Caco-2 (cell line): ENCODE measurements at regions of chr3 and their contacts with region 1.

Region 1: DNA sequence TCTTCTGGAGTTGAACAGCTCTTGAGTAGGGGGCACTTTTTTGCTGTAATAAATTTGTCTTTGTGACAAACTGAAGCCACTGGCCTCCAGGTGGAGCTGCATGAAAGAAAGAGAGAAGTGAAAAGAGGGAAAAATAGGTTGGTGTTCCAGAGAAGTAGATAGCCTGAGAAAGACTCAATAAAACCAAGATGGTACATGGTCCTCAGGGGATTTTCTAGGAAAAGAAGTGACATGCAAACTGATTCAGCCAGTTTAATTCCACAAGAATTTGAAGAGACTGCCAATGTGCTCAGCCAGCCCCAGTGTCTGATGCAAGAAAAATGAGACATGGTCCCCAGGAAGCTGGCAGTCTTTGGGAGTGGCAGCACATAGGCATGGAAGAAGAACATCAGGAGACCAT is 152.7 kb downstream of the CD47 start:
- DNase-seq: peak in 1 of 2 experiments; percentile 42
- H3K4me3 ChIP-seq: no peak overlapping the region
- H3K4me3 Mint-ChIP-seq: no peak overlapping the region
- H3K27ac Mint-ChIP-seq: no peak overlapping the region
- H3K4me1 ChIP-seq: no peaks in the 10 kb centered on the region
- H3K4me1 Mint-ChIP-seq: peaks cover 7% of the 10 kb centered on the region
- H3K27me3 ChIP-seq: no peaks in the 10 kb centered on the region; the same call in 1 of the 2 replicates
- H3K27me3 Mint-ChIP-seq: peaks cover 5% of the 10 kb centered on the region
- CTCF ChIP-seq: peak in 1 of 2 experiments; percentile 43

Region 2: DNA sequence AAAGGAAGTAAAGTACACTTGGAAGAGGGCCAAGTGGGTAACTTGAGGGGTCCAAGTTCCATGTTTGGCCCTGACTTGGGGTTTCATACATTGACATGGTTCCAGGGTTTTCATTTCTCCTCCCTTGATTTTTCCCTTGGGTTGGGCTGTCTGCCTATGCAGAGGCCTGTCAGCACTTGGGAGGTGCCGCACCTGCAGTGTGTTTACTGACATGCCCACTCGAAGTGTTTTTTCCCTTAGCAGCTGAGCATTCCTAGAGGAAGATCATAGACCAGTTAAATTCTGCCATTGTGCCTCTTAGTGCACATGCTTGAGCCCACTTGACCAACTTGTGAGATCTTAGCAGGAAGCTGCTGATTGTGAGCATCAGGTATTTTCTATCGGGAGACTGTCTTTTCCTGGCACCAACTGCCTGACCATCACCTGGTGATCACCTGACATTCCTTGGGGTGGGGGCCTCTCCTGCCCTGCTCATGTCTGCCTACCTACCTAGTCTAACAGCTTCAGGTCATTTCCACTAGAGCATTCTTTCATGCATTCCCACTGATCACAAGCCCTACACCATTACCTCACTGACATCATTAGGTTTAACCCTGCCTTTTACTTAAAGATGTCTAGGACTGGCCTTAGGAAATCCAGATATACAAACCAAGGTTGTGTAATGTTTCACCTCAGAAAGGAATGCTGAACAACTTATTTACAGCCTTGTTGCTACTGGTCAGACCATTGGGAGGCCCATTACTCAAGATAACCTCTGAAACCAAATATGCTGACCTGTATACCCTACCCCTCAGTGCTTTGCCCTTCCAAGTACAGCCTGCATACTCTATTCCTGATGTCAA is 84.3 kb after region 1 on chr3:
- CTCF ChIA-PET with region 1: no interaction called
- POLR2A ChIA-PET with region 1: no interaction called
- intact Hi-C with region 1: loop called (anchors 5 kb)
- DNase-seq: peak; percentile 63 to 70
- H3K4me3 ChIP-seq: no peak overlapping the region
- H3K4me3 Mint-ChIP-seq: no peak overlapping the region
- H3K27ac Mint-ChIP-seq: peak overlapping the region; percentile 14
- H3K4me1 ChIP-seq: peaks cover 9% of the 10 kb centered on the region; the same call in 1 of the 2 replicates
- H3K4me1 Mint-ChIP-seq: peaks cover 20% of the 10 kb centered on the region
- H3K27me3 ChIP-seq: no peaks in the 10 kb centered on the region
- H3K27me3 Mint-ChIP-seq: no peaks in the 10 kb centered on the region
- CTCF ChIP-seq: no peak

Region 3: GRCh38 chr3:108153451-108153981 is 215.4 kb after region 1 on chr3:
- CTCF ChIA-PET with region 1: no interaction called
- POLR2A ChIA-PET with region 1: no interaction called
- intact Hi-C with region 1: loop called (anchors 5 kb)
- DNase-seq: peak; percentile 50 to 51
- H3K4me3 ChIP-seq: no peak overlapping the region
- H3K4me3 Mint-ChIP-seq: no peak overlapping the region
- H3K27ac Mint-ChIP-seq: no peak overlapping the region
- H3K4me1 ChIP-seq: no peaks in the 10 kb centered on the region
- H3K4me1 Mint-ChIP-seq: peaks cover 6% of the 10 kb centered on the region
- H3K27me3 ChIP-seq: no peaks in the 10 kb centered on the region
- H3K27me3 Mint-ChIP-seq: no peaks in the 10 kb centered on the region
- CTCF ChIP-seq: peak; percentile 42 to 46

Region 4: DNA sequence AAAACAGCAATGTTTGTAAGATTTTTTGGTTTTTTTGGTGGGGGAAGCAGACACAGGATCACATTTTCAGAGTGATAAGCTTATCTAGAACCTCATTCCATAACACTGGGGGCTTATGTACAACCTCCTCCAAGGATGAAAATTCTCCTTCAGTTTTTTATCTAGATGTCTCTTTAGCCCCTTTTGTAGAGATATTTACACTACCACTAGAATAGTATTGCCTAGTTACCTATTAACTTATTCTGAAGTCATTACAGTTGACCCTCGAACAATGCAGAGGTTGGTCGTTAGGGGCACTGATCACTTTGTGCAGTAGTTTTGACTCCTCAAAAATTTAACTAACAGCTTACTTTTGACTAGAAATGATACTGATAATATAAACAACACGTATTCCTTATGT is 251.3 kb after region 1 on chr3:
- CTCF ChIA-PET with region 1: no interaction called
- POLR2A ChIA-PET with region 1: interaction called, 10 read pairs
- intact Hi-C with region 1: no loop called
- DNase-seq: peak; percentile 12 to 31
- H3K4me3 ChIP-seq: no peak overlapping the region
- H3K4me3 Mint-ChIP-seq: no peak overlapping the region
- H3K27ac Mint-ChIP-seq: peak overlapping the region; percentile 54
- H3K4me1 ChIP-seq: peaks cover 23% of the 10 kb centered on the region
- H3K4me1 Mint-ChIP-seq: peaks cover 10% of the 10 kb centered on the region
- H3K27me3 ChIP-seq: no peaks in the 10 kb centered on the region
- H3K27me3 Mint-ChIP-seq: no peaks in the 10 kb centered on the region
- CTCF ChIP-seq: peak; percentile 9 to 13

Region 5: GRCh38 chr3:108406661-108407206 is 468.6 kb after region 1 on chr3:
- CTCF ChIA-PET with region 1: no interaction called
- POLR2A ChIA-PET with region 1: no interaction called
- intact Hi-C with region 1: loop called (anchors 5 kb)
- DNase-seq: peak in 1 of 2 experiments; percentile 25
- H3K4me3 ChIP-seq: no peak overlapping the region
- H3K4me3 Mint-ChIP-seq: no peak overlapping the region
- H3K27ac Mint-ChIP-seq: no peak overlapping the region
- H3K4me1 ChIP-seq: no peaks in the 10 kb centered on the region
- H3K4me1 Mint-ChIP-seq: peaks cover 9% of the 10 kb centered on the region
- H3K27me3 ChIP-seq: no peaks in the 10 kb centered on the region
- H3K27me3 Mint-ChIP-seq: no peaks in the 10 kb centered on the region
- CTCF ChIP-seq: peak; percentile 36 to 50

Region 6: GRCh38 chr3:108477511-108478147 is 539.5 kb after region 1 on chr3:
- CTCF ChIA-PET with region 1: no interaction called
- POLR2A ChIA-PET with region 1: no interaction called
- intact Hi-C with region 1: loop called (anchors 1 kb)
- DNase-seq: peak; percentile 53 to 57
- H3K4me3 ChIP-seq: no peak overlapping the region
- H3K4me3 Mint-ChIP-seq: no peak overlapping the region
- H3K27ac Mint-ChIP-seq: no peak overlapping the region
- H3K4me1 ChIP-seq: no peaks in the 10 kb centered on the region
- H3K4me1 Mint-ChIP-seq: no peaks in the 10 kb centered on the region
- H3K27me3 ChIP-seq: no peaks in the 10 kb centered on the region
- H3K27me3 Mint-ChIP-seq: peaks cover 2% of the 10 kb centered on the region
- CTCF ChIP-seq: peak; percentile 59 to 70